ENCODE measurements at regions of chr6 and their contacts with region 1.

Region 1: DNA sequence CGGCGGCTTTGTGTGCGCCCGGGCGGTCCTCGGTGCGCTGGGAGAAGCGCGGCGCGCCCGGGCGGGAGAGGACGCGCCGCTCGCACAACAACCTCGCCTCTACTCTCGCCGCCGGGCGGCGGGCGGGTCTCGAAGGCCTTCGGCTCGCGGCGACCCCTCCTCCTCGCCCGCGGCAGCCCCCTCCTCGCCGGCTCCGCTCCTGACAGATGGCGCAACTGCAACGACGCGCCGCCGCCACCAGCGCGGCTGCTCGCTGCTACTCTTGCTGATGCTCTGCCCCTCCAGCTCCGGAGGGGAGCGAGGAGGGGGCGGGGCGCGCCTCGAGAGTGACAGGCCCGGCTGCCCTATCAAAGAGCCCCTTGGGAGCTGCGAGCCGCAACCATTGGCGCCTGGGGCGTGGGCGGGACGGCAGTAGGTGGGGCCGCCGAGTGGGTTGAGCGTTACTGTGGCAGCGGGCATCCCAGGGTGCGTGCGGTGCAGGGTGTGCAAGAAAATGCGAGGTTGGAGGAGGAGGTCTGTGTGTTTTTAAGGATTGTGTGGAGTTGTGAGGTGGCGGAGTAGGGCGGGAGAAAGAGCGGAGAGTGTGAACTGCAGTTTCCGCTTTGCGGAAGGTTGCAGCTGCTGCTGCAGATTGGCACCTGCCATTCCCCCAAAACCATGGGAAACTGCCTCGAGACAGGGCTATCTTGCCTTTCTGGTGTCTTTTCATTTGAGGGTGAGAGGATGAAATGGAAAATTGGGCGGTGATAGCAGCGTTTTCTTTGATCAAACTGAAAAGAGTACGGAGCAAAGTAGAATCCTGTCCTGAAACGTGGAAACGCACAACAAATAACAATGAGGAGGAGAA is at the start of gene FYN:
- DNase-seq: peak; percentile 98
- ATAC-seq: peak; percentile 87 to 98 (median 92)
- H3K4me3 ChIP-seq: peak within 1 kb of the TSS; percentile 70
- H3K4me3 Mint-ChIP-seq: peak within 1 kb of the TSS; percentile 98
- H3K27ac ChIP-seq: peak within 1 kb of the TSS; percentile 86
- H3K27ac Mint-ChIP-seq: peak within 1 kb of the TSS; percentile 83 to 97
- H3K4me1 ChIP-seq: peaks cover 18% of the 10 kb centered on the region
- H3K4me1 Mint-ChIP-seq: peaks cover 49 to 53% of the 10 kb centered on the region in 2 donors
- H3K27me3 ChIP-seq: no peaks in the 10 kb centered on the region
- H3K27me3 Mint-ChIP-seq: no peaks in the 10 kb centered on the region
- CTCF ChIP-seq: peak; percentile 21
- total RNA-seq, gene FYN: 616 to 757 (median 713) TPM

Region 2: GRCh38 chr6:111709615-111710398 is 163.6 kb before region 1 on chr6:
- intact Hi-C with region 1: loop called (anchors 2 kb)
- DNase-seq: peak in 1 of 2 donors; percentile 86
- ATAC-seq: peak; percentile 81
- H3K4me3 ChIP-seq: no peak overlapping the region
- H3K4me3 Mint-ChIP-seq: peak overlapping the region; percentile 58
- H3K27ac ChIP-seq: peak overlapping the region; percentile 56
- H3K27ac Mint-ChIP-seq: peak overlapping the region; percentile 98 to 100
- H3K4me1 ChIP-seq: peaks cover 44% of the 10 kb centered on the region
- H3K4me1 Mint-ChIP-seq: peaks cover 53 to 61% of the 10 kb centered on the region in 2 donors
- H3K27me3 ChIP-seq: no peaks in the 10 kb centered on the region
- H3K27me3 Mint-ChIP-seq: no peaks in the 10 kb centered on the region
- CTCF ChIP-seq: peak; percentile 76

Region 3: DNA sequence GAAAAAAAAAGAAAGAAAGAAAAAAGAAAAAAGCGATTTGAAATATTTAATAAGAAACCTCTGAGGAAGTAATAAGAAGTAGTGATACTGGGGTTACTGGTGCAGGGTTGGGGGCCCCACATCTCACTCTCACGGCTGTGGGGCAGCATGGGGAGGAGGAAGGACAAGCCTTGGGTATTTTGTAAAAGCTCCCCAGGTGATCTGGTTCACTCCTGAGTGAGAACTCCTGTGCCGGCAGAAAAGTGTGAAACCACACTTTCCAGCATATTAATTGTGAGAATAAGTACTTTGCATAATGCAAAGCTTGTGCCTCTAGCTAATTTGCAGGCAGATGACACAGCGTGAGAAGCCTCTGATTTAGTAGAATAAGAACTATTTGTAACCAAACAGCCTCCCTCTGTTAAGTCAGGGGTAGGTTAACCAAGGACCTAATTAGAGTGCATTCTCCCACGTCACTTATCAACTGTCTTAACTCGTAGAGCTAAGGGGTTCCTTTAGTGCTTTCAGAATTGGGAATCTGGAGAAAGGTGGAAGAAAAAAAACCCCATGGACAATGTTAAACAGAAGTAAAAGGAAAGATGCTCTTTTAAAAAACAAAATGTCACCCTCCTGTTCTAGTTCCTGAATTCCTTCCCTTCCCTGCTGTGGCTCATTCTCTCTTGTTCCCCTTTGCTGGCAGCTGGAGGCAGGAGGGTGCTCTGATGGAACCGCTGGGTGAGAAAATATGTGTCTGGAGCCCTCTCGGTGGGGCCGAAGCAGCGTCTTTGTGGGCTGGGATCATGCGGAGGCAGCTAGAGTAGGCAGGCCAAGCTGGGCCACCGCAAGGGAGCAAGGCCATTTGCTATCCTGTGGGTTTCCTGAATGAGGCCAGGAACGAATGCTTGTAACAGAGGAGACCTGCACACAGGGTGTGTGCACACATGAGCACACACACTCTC is 108.9 kb before region 1 on chr6:
- intact Hi-C with region 1: loop called (anchors 5 kb)
- DNase-seq: peak; percentile 60 to 86
- ATAC-seq: peak; percentile 41 to 43 (median 41)
- H3K4me3 ChIP-seq: no peak overlapping the region
- H3K4me3 Mint-ChIP-seq: peak overlapping the region; percentile 95
- H3K27ac ChIP-seq: peak overlapping the region; percentile 99
- H3K27ac Mint-ChIP-seq: peak overlapping the region; percentile 99 to 100
- H3K4me1 ChIP-seq: peaks cover 82% of the 10 kb centered on the region
- H3K4me1 Mint-ChIP-seq: peaks cover 99 to 100% of the 10 kb centered on the region in 2 donors
- H3K27me3 ChIP-seq: no peaks in the 10 kb centered on the region
- H3K27me3 Mint-ChIP-seq: no peaks in the 10 kb centered on the region
- CTCF ChIP-seq: no peak

Region 4: GRCh38 chr6:111812060-111813038 is 61.1 kb before region 1 on chr6:
- intact Hi-C with region 1: loop called (anchors 2 kb)
- DNase-seq: no peak
- ATAC-seq: no peak
- H3K4me3 ChIP-seq: no peak overlapping the region
- H3K4me3 Mint-ChIP-seq: no peak overlapping the region
- H3K27ac ChIP-seq: no peak overlapping the region
- H3K27ac Mint-ChIP-seq: peak overlapping the region; percentile 86 to 98
- H3K4me1 ChIP-seq: peaks cover 38% of the 10 kb centered on the region
- H3K4me1 Mint-ChIP-seq: peaks cover 59 to 75% of the 10 kb centered on the region in 2 donors
- H3K27me3 ChIP-seq: no peaks in the 10 kb centered on the region
- H3K27me3 Mint-ChIP-seq: no peaks in the 10 kb centered on the region
- CTCF ChIP-seq: no peak

Region 5: GRCh38 chr6:111854683-111855082 is 18.7 kb before region 1 on chr6:
- intact Hi-C with region 1: loop called (anchors 2 kb)
- DNase-seq: no peak
- ATAC-seq: peak in 1 of 3 donors; percentile 34
- H3K4me3 ChIP-seq: no peak overlapping the region
- H3K4me3 Mint-ChIP-seq: no peak overlapping the region
- H3K27ac ChIP-seq: no peak overlapping the region
- H3K27ac Mint-ChIP-seq: peak overlapping the region in 1 of 2 donors; percentile 88
- H3K4me1 ChIP-seq: peaks cover 43% of the 10 kb centered on the region
- H3K4me1 Mint-ChIP-seq: peaks cover 92 to 96% of the 10 kb centered on the region in 2 donors
- H3K27me3 ChIP-seq: no peaks in the 10 kb centered on the region
- H3K27me3 Mint-ChIP-seq: no peaks in the 10 kb centered on the region
- CTCF ChIP-seq: no peak

Region 6: GRCh38 chr6:112087136-112087911 is 213.9 kb after region 1 on chr6 and contains the starts of genes FAM229B and TUBE1:
- intact Hi-C with region 1: loop called (anchors 5 kb)
- DNase-seq: peak; percentile 82 to 97
- ATAC-seq: peak; percentile 95 to 99 (median 96)
- H3K4me3 ChIP-seq: peak within 1 kb of the TSS; percentile 86
- H3K4me3 Mint-ChIP-seq: no peak within 1 kb of the TSS
- H3K27ac ChIP-seq: peak within 1 kb of the TSS; percentile 90
- H3K27ac Mint-ChIP-seq: no peak within 1 kb of the TSS
- H3K4me1 ChIP-seq: no peaks in the 10 kb centered on the region
- H3K4me1 Mint-ChIP-seq: peaks cover 0 to 5% of the 10 kb centered on the region in 2 donors
- H3K27me3 ChIP-seq: peaks cover 20% of the 10 kb centered on the region
- H3K27me3 Mint-ChIP-seq: peaks cover 26 to 34% of the 10 kb centered on the region in 2 donors
- CTCF ChIP-seq: no peak
- total RNA-seq, gene FAM229B: 0.97 to 1.1 (median 0.99) TPM
- total RNA-seq, gene TUBE1: 15.6 to 31.2 (median 23.7) TPM